ENCODE measurements at regions of chr4 and their contacts with region 1.

Region 1: DNA sequence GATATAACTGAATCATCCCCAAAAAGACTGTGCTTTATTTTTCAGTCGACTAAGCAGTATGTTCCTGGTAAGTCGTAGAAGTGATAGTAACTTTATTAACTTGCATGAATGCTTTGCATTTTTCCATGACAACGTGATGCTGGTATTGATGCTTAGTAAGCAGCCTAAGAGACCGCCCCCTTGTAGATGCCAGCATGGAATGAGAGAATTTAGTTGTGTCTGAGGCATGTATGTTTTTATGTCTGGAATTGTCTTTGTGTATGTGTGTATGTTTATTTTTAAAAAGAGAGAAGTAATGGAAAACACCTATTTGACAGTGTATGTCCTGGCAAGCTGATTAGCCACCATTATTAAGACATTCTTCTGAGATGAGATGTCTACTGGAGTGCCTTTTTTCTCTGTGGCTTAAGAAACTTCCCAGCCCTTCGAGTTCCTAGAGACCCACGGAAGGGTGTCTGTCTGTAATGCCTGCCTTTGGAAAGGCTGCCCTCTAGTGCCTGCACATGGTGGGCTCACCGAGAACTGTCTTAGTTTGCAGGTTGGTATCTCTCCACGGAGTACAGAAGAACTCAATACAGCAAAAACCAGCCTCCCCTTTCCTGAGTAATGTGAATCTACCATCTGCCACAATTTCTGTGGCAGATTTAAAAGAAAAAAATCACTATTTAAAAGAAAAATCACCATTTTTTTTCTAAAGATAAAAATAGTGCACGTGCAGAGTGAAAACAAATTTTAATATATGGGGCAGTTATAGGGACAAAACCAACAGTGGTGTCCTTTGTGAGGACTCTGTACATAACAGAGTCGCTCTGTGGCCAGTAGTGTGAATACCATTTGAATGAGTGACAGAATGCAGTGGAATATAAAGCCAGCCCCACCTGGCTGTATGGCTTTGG is 85.9 kb downstream of the AASDH start:
- DNase-seq: peak; percentile 79
- ATAC-seq: peak; percentile 97
- H3K4me3 Mint-ChIP-seq: peak overlapping the region; percentile 40
- H3K27ac Mint-ChIP-seq: peak overlapping the region; percentile 33
- H3K4me1 Mint-ChIP-seq: peaks cover 12% of the 10 kb centered on the region
- H3K27me3 Mint-ChIP-seq: no peaks in the 10 kb centered on the region

Region 2: DNA sequence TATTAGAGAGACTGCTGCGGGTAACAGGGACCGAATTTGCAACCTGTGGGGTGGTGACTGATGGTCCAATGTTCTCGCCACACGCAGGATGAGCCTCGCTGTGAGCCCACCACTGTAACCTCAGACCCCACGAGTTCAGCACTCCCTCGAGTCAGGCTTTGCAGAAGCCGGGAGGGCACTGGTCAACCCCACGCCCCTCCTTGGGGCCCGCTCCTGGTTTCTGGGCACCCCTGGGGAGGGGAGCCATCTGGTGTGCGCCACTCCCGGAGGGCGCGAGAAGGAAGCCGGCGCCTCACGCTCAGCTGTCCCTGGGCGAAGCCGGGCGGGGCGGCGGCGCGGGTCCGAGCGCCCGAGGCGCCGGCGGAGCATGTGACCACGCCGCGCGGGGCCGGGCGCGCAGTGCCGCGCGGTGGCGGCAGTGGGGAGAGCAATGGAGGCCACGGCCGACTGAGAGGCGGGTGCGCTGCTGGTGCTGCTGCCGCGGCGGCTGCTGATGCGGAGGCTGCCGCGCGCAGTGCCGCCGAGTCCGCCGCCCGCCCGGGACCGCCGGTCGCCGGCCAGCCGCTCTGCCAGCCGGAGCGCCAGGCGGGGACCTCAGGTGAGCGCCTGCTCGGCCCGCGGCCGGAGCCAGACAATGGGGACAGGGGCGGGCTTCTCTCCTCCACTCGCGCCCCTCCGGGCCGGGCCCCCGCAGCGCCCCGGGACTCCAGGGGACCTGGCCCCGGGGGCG is 252.6 kb before region 1 on chr4:
- CTCF ChIA-PET with region 1: interaction called, 5 read pairs
- POLR2A ChIA-PET with region 1: no interaction called
- intact Hi-C with region 1: loop called (anchors 1 to 5 kb)
- DNase-seq: peak; percentile 78
- ATAC-seq: peak; percentile 96
- H3K4me3 Mint-ChIP-seq: peak overlapping the region; percentile 65
- H3K27ac Mint-ChIP-seq: no peak overlapping the region
- H3K4me1 Mint-ChIP-seq: peaks cover 13% of the 10 kb centered on the region
- H3K27me3 Mint-ChIP-seq: peaks cover 37% of the 10 kb centered on the region

Region 3: GRCh38 chr4:56129431-56129861 is 172.0 kb before region 1 on chr4:
- CTCF ChIA-PET with region 1: interaction called, 3 read pairs
- POLR2A ChIA-PET with region 1: no interaction called
- intact Hi-C with region 1: loop called in 1 of 2 experiments (anchors 2 kb)
- DNase-seq: peak; percentile 41
- ATAC-seq: no peak
- H3K4me3 Mint-ChIP-seq: no peak overlapping the region
- H3K27ac Mint-ChIP-seq: no peak overlapping the region
- H3K4me1 Mint-ChIP-seq: no peaks in the 10 kb centered on the region
- H3K27me3 Mint-ChIP-seq: peaks cover 5% of the 10 kb centered on the region

Region 4: DNA sequence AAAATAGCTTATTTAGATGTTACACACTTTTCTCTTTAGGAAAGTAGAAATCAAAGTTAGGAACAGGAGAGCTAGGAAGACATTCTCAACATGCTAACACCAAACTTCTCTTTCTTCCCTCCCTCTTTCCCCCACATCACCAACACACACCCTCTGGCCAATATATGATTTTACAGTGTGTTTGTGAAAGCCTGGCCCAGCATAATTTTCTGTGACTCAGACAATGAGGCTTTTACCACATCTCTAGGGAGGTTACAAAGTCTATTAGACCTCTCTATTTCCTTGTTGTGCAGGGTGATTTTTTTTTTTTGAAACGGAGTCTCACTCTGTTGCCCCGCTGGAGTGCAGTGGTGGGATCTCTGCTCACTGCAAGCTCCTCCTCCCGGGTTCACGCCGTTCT is 104.0 kb before region 1 on chr4:
- CTCF ChIA-PET with region 1: interaction called, 3 read pairs
- POLR2A ChIA-PET with region 1: no interaction called
- intact Hi-C with region 1: loop called in 1 of 2 experiments (anchors 10 kb)
- DNase-seq: no peak
- ATAC-seq: no peak
- H3K4me3 Mint-ChIP-seq: no peak overlapping the region
- H3K27ac Mint-ChIP-seq: no peak overlapping the region
- H3K4me1 Mint-ChIP-seq: no peaks in the 10 kb centered on the region
- H3K27me3 Mint-ChIP-seq: peaks cover 10% of the 10 kb centered on the region